IMR-90 (cell line): ENCODE measurements at regions of chr17 and their contacts with region 1.

Region 1: GRCh38 chr17:15171167-15172047 is 93.7 kb downstream of the PMP22 start:
- DNase-seq: peak; percentile 75
- ATAC-seq: peak; percentile 100
- H3K4me3 ChIP-seq: no peak overlapping the region
- H3K27ac ChIP-seq: no peak overlapping the region
- H3K4me1 ChIP-seq: no peaks in the 10 kb centered on the region
- H3K27me3 ChIP-seq: peaks cover 7% of the 10 kb centered on the region
- CTCF ChIP-seq: peak; percentile 80
- POLR2A ChIP-seq: no peak
- RAD21 ChIP-seq: peak; percentile 85

Region 2: DNA sequence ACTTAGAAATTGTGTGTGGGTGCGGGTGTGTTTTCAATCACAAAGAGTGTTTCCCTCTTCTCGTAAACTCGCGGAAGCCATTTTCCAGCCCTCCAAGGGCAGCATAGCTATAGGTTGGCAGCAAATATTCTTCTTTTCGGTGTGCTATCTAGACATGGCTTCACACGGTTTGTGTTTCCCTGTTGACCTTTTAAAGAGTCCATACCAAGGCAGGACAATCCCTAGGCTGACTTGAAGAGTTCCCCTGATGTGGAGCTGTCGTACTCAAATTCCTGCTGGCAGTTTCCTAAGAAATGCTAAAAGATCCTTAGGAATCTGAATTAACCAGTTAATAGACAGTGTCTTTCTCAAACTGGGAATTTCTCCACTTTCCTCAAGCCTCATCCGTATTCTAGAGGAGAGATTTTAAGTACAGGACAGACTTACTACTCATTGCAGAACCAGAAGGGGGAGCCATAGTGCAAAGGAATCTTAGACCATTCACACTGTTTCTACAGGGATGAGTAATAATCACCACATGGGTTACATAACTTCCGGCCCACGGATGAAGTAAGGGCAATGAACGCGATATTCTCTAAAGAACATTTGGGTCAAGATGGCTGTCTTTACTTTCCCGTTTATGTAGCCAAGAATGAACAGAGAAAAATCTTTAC is 1865.0 kb before region 1 on chr17:
- CTCF ChIA-PET with region 1: no interaction called
- POLR2A ChIA-PET with region 1: no interaction called
- dilution Hi-C with region 1: no loop called
- in situ Hi-C with region 1: loop called (anchors 10 kb)
- intact Hi-C with region 1: no loop called
- DNase-seq: peak; percentile 84
- ATAC-seq: no peak
- H3K4me3 ChIP-seq: no peak overlapping the region
- H3K27ac ChIP-seq: no peak overlapping the region
- H3K4me1 ChIP-seq: peaks cover 2% of the 10 kb centered on the region; the same call in 1 of the 2 replicates
- H3K27me3 ChIP-seq: no peaks in the 10 kb centered on the region; the same call in 1 of the 2 replicates
- CTCF ChIP-seq: peak; percentile 59
- POLR2A ChIP-seq: no peak
- RAD21 ChIP-seq: peak; percentile 75

Region 3: DNA sequence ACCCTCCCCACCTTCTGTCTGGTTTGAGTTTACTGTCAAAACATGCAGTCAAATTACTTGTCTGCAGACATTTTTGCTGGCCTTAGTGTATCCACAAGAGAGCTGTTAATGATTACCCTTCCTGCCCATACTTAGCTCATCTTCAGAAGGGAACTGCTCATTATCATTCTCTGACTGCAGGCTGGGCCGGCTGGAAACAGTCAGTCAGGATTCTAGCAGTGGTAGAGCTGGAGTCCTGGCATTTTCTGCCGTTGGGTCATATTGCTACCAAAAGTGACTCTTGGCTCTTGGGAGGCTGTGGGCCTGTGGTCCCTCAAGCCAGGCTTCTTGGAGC is 410.4 kb before region 1 on chr17:
- CTCF ChIA-PET with region 1: no interaction called
- POLR2A ChIA-PET with region 1: no interaction called
- dilution Hi-C with region 1: no loop called
- in situ Hi-C with region 1: no loop called
- intact Hi-C with region 1: no loop called
- DNase-seq: no peak
- ATAC-seq: no peak
- H3K4me3 ChIP-seq: no peak overlapping the region
- H3K27ac ChIP-seq: no peak overlapping the region
- H3K4me1 ChIP-seq: no peaks in the 10 kb centered on the region
- H3K27me3 ChIP-seq: 0 out of 2 replicates have a peak, but pooled peaks cover 2% of the 10 kb centered on the region
- CTCF ChIP-seq: no peak
- POLR2A ChIP-seq: no peak
- RAD21 ChIP-seq: no peak

Region 4: GRCh38 chr17:14784997-14785696 is 386.3 kb before region 1 on chr17:
- CTCF ChIA-PET with region 1: interaction called, 10 read pairs
- POLR2A ChIA-PET with region 1: no interaction called
- dilution Hi-C with region 1: no loop called
- in situ Hi-C with region 1: no loop called
- intact Hi-C with region 1: no loop called
- DNase-seq: no peak
- ATAC-seq: no peak
- H3K4me3 ChIP-seq: no peak overlapping the region
- H3K27ac ChIP-seq: no peak overlapping the region
- H3K4me1 ChIP-seq: no peaks in the 10 kb centered on the region; the same call in 1 of the 2 replicates
- H3K27me3 ChIP-seq: no peaks in the 10 kb centered on the region
- CTCF ChIP-seq: no peak
- POLR2A ChIP-seq: no peak
- RAD21 ChIP-seq: no peak